CD8-positive, alpha-beta T cell (primary cell): ENCODE measurements at regions of chr11 and their contacts with region 1.

Region 1: DNA sequence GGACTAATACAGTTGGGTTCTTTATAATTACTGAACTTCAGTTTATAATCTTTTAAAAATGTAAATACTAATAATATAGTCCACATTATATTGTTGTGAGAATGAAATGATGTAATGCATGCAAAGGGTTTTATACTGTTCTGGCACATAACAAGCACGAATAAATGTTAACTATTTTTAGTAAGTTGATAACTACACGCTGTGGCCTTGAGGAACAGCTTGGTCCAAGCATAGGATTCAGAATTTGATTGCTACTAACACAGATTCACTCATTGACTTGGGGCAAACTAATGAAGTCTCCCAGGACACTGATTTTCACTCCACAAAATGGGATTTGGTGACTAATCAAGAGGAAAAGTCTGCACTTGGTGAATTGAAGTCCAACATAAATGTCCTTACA is 38.3 kb downstream of the KCNA4 start:
- DNase-seq: no peak
- ATAC-seq: no peak
- H3K4me3 ChIP-seq: no peak overlapping the region
- H3K4me3 Mint-ChIP-seq: no peak overlapping the region
- H3K27ac ChIP-seq: no peak overlapping the region
- H3K27ac Mint-ChIP-seq: no peak overlapping the region
- H3K4me1 ChIP-seq: no peaks in the 10 kb centered on the region
- H3K4me1 Mint-ChIP-seq: no peaks in the 10 kb centered on the region
- H3K27me3 ChIP-seq: no peaks in the 10 kb centered on the region
- H3K27me3 Mint-ChIP-seq: peaks cover 2% of the 10 kb centered on the region
- CTCF ChIP-seq: no peak

Region 2: DNA sequence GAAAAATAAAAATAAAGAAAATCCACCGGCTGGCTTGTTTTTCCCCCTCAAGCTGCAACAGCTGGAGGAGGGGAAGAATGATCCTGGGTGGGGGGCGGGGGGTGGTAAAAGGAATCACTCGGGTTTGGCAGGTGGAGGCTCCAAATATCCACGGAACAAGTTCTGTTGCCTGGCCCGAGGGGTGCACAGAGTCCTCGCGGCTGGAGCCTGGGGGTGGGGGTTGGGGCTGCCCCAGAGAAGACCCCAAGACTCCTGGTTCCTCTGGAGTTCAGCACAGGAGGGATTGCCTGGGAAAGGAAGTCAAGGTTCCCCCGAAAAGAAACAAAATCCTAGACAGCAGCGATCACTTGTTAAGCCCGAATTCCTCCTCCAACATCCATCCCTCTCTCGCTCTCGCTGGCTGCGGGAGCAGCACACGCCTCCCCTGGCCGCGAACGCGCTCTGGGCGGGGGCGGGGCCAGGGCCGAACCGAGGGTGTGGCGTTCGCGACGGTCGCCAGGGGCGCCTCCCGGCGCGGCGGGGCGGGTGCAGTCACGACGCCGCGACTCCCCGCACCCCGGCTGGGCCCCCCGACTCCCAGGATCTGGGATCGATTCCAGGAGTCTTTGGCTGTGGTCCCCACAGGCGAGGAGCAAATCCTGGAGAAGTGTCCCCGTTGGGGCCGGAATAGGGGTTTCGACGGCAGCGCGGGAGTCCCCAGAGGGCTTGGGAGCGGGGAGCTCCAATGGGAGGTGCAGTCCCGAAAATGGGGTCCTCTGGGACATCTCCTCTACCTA is 38.2 kb after region 1 on chr11 and contains the start of gene KCNA4:
- CTCF ChIA-PET with region 1: no interaction called
- POLR2A ChIA-PET with region 1: no interaction called
- intact Hi-C with region 1: loop called in 1 of 2 experiments (anchors 1 kb)
- DNase-seq: no peak
- ATAC-seq: no peak
- H3K4me3 ChIP-seq: no peak within 1 kb of the TSS
- H3K4me3 Mint-ChIP-seq: no peak within 1 kb of the TSS
- H3K27ac ChIP-seq: no peak within 1 kb of the TSS
- H3K27ac Mint-ChIP-seq: no peak within 1 kb of the TSS
- H3K4me1 ChIP-seq: no peaks in the 10 kb centered on the region
- H3K4me1 Mint-ChIP-seq: no peaks in the 10 kb centered on the region
- H3K27me3 ChIP-seq: no peaks in the 10 kb centered on the region
- H3K27me3 Mint-ChIP-seq: peaks cover 27% of the 10 kb centered on the region
- CTCF ChIP-seq: no peak
- total RNA-seq, gene KCNA4: not detected